ENCODE measurements at regions of chr22 and their contacts with region 1.

Region 1: GRCh38 chr22:19799322-19800190 is 39.0 kb downstream of the TBX1 start:
- DNase-seq: peak; percentile 88 to 94
- ATAC-seq: peak; percentile 90 to 94 (median 92)
- H3K4me3 ChIP-seq: no peak overlapping the region
- H3K27ac ChIP-seq: peak overlapping the region; percentile 77
- H3K4me1 ChIP-seq: peaks cover 23% of the 10 kb centered on the region
- H3K27me3 ChIP-seq: no peaks in the 10 kb centered on the region
- CTCF ChIP-seq: no peak

Region 2: DNA sequence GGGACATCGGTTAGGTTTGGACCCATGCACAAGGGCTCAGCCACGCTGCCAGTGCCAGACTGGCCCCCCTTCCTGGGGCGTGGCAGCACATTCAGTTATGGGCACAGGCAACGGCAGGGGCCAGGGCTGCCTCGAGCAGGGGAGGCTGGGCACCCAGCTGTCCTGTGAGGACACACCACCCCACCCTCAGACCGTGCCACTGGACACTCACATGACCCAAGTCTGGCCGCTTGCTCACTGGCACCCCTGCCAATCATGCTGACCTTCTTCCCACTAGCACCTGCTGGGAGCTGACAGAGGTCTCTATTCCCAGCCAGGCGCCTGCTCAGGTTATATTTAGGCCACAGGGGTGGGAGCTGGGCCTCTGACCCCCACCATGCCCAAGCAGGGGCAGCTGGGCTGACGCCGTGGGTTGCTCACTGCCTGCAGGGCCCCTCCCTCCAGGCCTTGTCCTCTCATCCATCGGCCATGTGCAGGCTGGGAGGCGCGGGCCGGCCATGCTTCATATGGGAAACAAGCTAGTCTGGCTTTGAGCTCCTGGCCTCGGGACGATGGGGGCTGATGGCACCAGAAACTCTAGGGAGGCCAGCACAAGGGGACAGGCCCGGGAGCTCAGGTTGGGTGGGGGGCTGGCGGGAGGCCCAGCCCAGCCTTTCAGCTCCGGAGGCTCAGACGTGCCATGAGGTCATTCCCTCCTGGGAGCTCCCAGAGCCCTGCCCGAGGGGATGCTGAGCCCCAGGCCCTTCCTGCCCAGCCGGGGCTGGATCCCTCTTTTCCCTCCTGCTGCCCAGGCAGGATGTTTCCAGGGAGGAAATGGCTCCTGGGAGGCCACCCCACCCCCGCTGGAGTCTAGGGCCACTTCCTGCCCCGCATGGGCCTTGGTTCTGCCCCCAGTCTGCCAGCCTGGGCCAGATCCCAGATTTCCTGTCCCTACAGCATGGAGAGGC is 54.1 kb before region 1 on chr22:
- intact Hi-C with region 1: loop called in 1 of 2 experiments (anchors 5 kb)
- DNase-seq: peak; percentile 91 to 98
- ATAC-seq: peak; percentile 92 to 94 (median 92)
- H3K4me3 ChIP-seq: no peak overlapping the region
- H3K27ac ChIP-seq: peak overlapping the region; percentile 89
- H3K4me1 ChIP-seq: peaks cover 35% of the 10 kb centered on the region
- H3K27me3 ChIP-seq: no peaks in the 10 kb centered on the region
- CTCF ChIP-seq: no peak

Region 3: GRCh38 chr22:19761500-19762314 is 37.8 kb before region 1 on chr22:
- intact Hi-C with region 1: loop called in 1 of 2 experiments (anchors 1 kb)
- DNase-seq: no peak
- ATAC-seq: peak; percentile 30 to 70 (median 59)
- H3K4me3 ChIP-seq: peak overlapping the region; percentile 80
- H3K27ac ChIP-seq: peak overlapping the region; percentile 87
- H3K4me1 ChIP-seq: peaks cover 11% of the 10 kb centered on the region
- H3K27me3 ChIP-seq: peaks cover 0 to 14% (median 0%) of the 10 kb centered on the region in 3 donors
- CTCF ChIP-seq: no peak

Region 4: GRCh38 chr22:19854778-19855503 is 55.4 kb after region 1 on chr22 and contains the starts of genes GNB1L and RTL10:
- intact Hi-C with region 1: loop called in 1 of 2 experiments (anchors 2 kb)
- DNase-seq: peak; percentile 98 to 99
- ATAC-seq: peak; percentile 97 to 98 (median 97)
- H3K4me3 ChIP-seq: peak within 1 kb of the TSS; percentile 75
- H3K27ac ChIP-seq: peak within 1 kb of the TSS; percentile 89
- H3K4me1 ChIP-seq: peaks cover 15% of the 10 kb centered on the region
- H3K27me3 ChIP-seq: no peaks in the 10 kb centered on the region
- CTCF ChIP-seq: no peak
- total RNA-seq, gene GNB1L: 1.5 to 3.4 (median 3.0) TPM
- total RNA-seq, gene RTL10: 5.3 to 9.7 (median 8.1) TPM

Measured in psoas muscle (tissue), 8 donors.